ENCODE measurements at regions of chr1 and their contacts with region 1.

Region 1: DNA sequence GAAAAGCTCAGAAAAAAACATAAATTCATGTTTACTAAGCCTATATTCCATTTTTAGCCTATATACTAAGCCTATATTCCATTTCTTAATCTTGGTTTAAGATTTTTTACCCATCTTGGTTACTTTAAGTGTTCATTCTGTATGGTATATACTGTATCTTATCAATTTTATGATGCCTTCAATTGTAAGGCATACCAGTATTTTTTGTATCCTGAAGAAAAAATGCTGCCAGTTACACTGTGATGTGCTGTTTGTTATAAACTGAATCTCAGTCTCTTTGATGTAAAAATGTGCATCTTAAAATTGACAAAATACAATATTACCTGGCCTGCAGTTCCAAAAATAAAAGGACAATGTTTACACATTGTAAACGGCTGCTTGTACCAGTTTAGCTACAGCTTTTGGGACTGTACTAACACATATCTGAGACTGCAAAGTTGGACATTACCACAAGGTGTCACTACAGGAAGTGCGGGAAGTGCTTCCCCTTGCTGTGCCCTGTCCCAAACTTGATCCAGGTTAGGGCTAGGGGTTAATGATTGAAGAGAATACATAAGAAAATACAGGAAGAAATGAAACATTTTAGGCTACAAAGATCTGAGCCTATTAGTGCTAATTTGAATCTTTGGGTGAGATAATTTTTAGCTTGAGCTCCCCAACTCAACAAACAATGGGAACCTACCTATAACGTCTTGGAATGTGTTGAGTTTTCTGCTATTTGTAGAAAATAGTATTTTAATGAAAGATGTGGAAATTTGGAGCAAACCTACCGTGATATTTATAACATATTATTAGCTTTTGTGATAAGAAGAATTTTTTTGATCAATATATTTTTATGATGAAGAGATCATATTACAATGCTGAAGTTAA is 108.9 kb downstream of the LBR start:
- DNase-seq: no peak
- H3K4me3 ChIP-seq: no peak overlapping the region
- H3K27ac ChIP-seq: no peak overlapping the region
- H3K4me1 ChIP-seq: no peaks in the 10 kb centered on the region
- H3K27me3 ChIP-seq: no peaks in the 10 kb centered on the region
- CTCF ChIP-seq: peak; percentile 43 to 65 (median 52)
- EP300 ChIP-seq: no peak
- POLR2A ChIP-seq: no peak

Region 2: DNA sequence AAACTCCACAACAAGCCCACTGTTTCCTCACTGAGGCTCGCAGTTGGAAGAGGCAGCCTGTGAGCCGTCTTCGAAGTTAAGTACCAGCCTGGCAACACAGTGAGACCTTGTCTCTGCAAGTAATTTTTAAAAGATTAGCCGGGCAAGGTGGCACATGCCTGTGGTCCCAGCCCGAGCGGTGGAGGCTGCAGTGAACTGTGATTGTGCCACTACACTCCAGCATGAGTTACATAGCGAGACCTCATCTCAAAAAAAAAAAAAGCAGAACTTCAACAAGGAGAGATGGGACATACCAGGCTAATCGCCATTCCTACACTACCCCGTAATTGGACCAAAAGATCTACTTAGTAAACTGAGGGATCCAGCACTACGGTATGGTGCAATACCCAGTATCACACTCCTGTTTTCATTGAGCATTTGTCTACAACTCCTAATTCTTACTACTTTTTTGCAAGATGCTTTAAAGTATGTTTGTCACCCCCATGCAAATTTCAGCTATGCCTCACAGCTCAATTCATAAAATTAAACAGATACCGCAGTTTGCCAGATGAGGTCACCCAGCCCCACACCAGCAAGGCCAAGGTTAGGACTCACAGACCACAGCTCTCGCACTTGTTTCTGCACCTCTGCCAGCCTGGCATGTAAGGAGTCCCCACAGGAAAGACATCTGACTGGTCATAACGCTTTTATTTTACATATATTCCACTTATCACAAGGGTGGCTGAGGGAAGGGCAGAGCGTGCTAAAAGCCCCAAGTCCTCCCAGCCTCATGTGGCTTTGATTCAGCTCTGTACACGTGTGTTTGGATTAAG is 659.2 kb after region 1 on chr1:
- intact Hi-C with region 1: loop called (anchors 5 kb)
- DNase-seq: peak; percentile 37
- H3K4me3 ChIP-seq: no peak overlapping the region
- H3K27ac ChIP-seq: no peak overlapping the region
- H3K4me1 ChIP-seq: peaks cover 0 to 7% (median 4%) of the 10 kb centered on the region in 4 donors
- H3K27me3 ChIP-seq: no peaks in the 10 kb centered on the region
- CTCF ChIP-seq: no peak
- EP300 ChIP-seq: no peak
- POLR2A ChIP-seq: no peak